Caco-2 (cell line): ENCODE measurements at regions of chr1 and their contacts with region 1.

Region 1: GRCh38 chr1:177913762-177914540 is 55.9 kb downstream of the SEC16B start:
- DNase-seq: peak; percentile 50
- H3K4me3 ChIP-seq: no peak overlapping the region
- H3K4me3 Mint-ChIP-seq: no peak overlapping the region
- H3K27ac Mint-ChIP-seq: no peak overlapping the region
- H3K4me1 ChIP-seq: no peaks in the 10 kb centered on the region
- H3K4me1 Mint-ChIP-seq: no peaks in the 10 kb centered on the region
- H3K27me3 ChIP-seq: no peaks in the 10 kb centered on the region
- H3K27me3 Mint-ChIP-seq: peaks cover 4% of the 10 kb centered on the region
- CTCF ChIP-seq: peak; percentile 46 to 79

Region 2: GRCh38 chr1:177780096-177780700 is 133.8 kb before region 1 on chr1:
- CTCF ChIA-PET with region 1: no interaction called
- POLR2A ChIA-PET with region 1: no interaction called
- intact Hi-C with region 1: loop called (anchors 2 kb)
- DNase-seq: peak in 1 of 2 experiments; percentile 42
- H3K4me3 ChIP-seq: no peak overlapping the region
- H3K4me3 Mint-ChIP-seq: no peak overlapping the region
- H3K27ac Mint-ChIP-seq: no peak overlapping the region
- H3K4me1 ChIP-seq: no peaks in the 10 kb centered on the region
- H3K4me1 Mint-ChIP-seq: no peaks in the 10 kb centered on the region
- H3K27me3 ChIP-seq: no peaks in the 10 kb centered on the region; the same call in 1 of the 2 replicates
- H3K27me3 Mint-ChIP-seq: peaks cover 14% of the 10 kb centered on the region
- CTCF ChIP-seq: peak; percentile 60 to 66

Region 3: DNA sequence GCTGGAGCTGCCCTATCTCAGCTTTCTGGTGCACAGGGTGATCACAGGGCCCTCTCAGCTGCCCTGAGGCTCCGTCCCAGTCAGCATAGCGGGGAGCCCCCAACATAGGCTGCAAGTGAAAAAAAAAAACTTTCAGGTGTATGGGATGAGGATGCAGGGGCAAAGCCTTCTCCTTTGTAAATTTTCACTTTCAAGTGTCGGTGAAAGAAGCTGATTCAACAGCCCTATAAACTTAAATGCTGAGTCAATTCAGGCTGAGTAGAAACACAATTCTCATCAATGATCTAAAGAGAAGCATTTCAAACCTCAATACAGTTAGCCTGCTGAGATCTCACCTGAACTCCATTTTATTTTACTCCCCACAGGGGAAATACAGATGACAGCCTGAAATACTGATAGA is 115.3 kb before region 1 on chr1:
- CTCF ChIA-PET with region 1: no interaction called
- POLR2A ChIA-PET with region 1: no interaction called
- intact Hi-C with region 1: loop called (anchors 1 kb)
- DNase-seq: no peak
- H3K4me3 ChIP-seq: no peak overlapping the region
- H3K4me3 Mint-ChIP-seq: no peak overlapping the region
- H3K27ac Mint-ChIP-seq: no peak overlapping the region
- H3K4me1 ChIP-seq: no peaks in the 10 kb centered on the region
- H3K4me1 Mint-ChIP-seq: no peaks in the 10 kb centered on the region
- H3K27me3 ChIP-seq: no peaks in the 10 kb centered on the region; the same call in 1 of the 2 replicates
- H3K27me3 Mint-ChIP-seq: peaks cover 6% of the 10 kb centered on the region
- CTCF ChIP-seq: no peak

Region 4: GRCh38 chr1:177824508-177824982 is 89.4 kb before region 1 on chr1:
- CTCF ChIA-PET with region 1: no interaction called
- POLR2A ChIA-PET with region 1: no interaction called
- intact Hi-C with region 1: loop called (anchors 10 kb)
- DNase-seq: no peak
- H3K4me3 ChIP-seq: no peak overlapping the region
- H3K4me3 Mint-ChIP-seq: no peak overlapping the region
- H3K27ac Mint-ChIP-seq: no peak overlapping the region
- H3K4me1 ChIP-seq: peaks cover 7% of the 10 kb centered on the region; the same call in 1 of the 2 replicates
- H3K4me1 Mint-ChIP-seq: no peaks in the 10 kb centered on the region
- H3K27me3 ChIP-seq: no peaks in the 10 kb centered on the region
- H3K27me3 Mint-ChIP-seq: peaks cover 4% of the 10 kb centered on the region
- CTCF ChIP-seq: no peak

Region 5: DNA sequence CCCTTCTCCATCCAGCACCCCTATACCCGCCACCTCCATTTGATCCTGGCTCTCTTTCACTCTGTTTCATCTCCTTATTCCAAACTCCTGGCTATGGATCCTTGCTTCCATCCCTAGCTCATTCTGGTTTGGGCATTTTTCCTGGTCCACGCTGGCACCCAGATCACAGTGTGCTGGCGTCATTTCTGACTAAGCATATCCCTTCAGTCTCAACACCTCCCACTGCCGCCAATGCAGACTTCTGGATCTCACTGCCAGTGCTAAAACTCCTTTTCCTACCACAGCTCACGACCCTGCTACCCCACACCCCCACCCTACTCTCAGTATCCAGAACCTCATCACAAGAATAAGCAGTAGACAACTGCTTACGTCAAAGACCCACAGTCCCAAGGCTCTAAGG is 39.6 kb after region 1 on chr1:
- CTCF ChIA-PET with region 1: no interaction called
- POLR2A ChIA-PET with region 1: no interaction called
- intact Hi-C with region 1: no loop called
- DNase-seq: no peak
- H3K4me3 ChIP-seq: no peak overlapping the region
- H3K4me3 Mint-ChIP-seq: no peak overlapping the region
- H3K27ac Mint-ChIP-seq: no peak overlapping the region
- H3K4me1 ChIP-seq: no peaks in the 10 kb centered on the region
- H3K4me1 Mint-ChIP-seq: no peaks in the 10 kb centered on the region
- H3K27me3 ChIP-seq: no peaks in the 10 kb centered on the region
- H3K27me3 Mint-ChIP-seq: peaks cover 4% of the 10 kb centered on the region
- CTCF ChIP-seq: no peak